Activated CD4-positive, alpha-beta T cell treated with anti-CD3 and anti-CD28 coated beads, Interleukin-2, amount 10 ng/mL, durations not matched to agents 24 days and 14 days (primary cell): ENCODE measurements at regions of chr10 and their contacts with region 1.

Region 1: DNA sequence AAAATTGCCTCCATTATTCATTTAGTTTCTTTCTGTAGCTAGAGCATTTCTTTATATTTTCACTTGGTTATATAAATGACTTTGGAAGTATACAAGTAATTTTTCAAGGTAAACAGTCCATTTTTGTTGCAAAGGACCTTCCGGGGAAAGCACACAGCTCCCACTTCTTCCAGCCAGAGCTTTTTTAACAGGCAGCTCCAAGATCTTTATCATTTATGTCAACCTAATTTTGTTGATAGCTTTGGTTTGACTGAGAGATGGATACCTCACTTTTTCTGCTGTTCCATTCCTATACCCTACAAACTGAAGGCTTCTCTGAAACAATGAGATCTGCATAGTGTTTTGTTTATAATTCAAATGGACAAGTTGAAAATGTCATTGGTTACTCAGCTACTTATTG is 49.3 kb upstream of the RAB11FIP2 start:
- DNase-seq: no peak
- H3K4me3 Mint-ChIP-seq: no peak overlapping the region
- H3K27ac Mint-ChIP-seq: no peak overlapping the region
- H3K4me1 Mint-ChIP-seq: no peaks in the 10 kb centered on the region
- H3K27me3 Mint-ChIP-seq: peaks cover 10% of the 10 kb centered on the region

Region 2: DNA sequence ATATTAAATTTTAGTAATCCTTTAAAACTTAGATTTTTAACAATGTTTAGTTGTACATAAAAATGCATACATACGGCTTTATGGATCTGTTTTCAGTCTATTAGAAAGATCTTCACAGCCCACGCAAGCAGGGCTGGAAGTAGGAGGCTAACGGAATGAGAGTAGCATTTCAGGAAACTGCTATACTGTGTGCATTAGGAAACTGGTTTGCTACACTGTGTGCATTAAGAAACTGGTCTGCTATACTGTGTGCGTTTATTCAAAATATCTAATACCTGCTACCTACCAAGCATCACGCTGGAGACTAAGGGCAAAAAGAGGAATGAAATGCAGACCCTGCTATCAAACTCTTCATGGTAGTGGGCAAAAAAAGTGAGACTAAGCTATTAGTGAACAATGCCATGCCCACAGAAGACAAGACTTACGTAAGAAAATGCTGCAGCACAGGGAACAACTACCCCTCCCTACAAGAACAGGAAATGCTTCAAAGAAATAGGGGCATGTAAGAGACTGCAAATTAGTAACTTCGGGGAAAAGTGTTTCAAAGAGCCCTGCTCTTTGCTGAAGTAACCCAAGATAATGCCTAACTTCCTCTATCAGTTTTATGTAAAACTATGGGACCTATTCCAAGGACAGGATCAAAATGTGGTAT is 60.5 kb before region 1 on chr10:
- intact Hi-C with region 1: loop called (anchors 5 kb)
- DNase-seq: peak; percentile 57
- H3K4me3 Mint-ChIP-seq: peak overlapping the region; percentile 58
- H3K27ac Mint-ChIP-seq: peak overlapping the region; percentile 15
- H3K4me1 Mint-ChIP-seq: peaks cover 18% of the 10 kb centered on the region
- H3K27me3 Mint-ChIP-seq: no peaks in the 10 kb centered on the region

Region 3: GRCh38 chr10:118241229-118242137 is 145.5 kb after region 1 on chr10:
- intact Hi-C with region 1: loop called (anchors 10 kb)
- DNase-seq: peak; percentile 89
- H3K4me3 Mint-ChIP-seq: no peak overlapping the region
- H3K27ac Mint-ChIP-seq: no peak overlapping the region
- H3K4me1 Mint-ChIP-seq: peaks cover 1% of the 10 kb centered on the region
- H3K27me3 Mint-ChIP-seq: peaks cover 41% of the 10 kb centered on the region